ENCODE measurements at regions of chr1 and their contacts with region 1.

Region 1: DNA sequence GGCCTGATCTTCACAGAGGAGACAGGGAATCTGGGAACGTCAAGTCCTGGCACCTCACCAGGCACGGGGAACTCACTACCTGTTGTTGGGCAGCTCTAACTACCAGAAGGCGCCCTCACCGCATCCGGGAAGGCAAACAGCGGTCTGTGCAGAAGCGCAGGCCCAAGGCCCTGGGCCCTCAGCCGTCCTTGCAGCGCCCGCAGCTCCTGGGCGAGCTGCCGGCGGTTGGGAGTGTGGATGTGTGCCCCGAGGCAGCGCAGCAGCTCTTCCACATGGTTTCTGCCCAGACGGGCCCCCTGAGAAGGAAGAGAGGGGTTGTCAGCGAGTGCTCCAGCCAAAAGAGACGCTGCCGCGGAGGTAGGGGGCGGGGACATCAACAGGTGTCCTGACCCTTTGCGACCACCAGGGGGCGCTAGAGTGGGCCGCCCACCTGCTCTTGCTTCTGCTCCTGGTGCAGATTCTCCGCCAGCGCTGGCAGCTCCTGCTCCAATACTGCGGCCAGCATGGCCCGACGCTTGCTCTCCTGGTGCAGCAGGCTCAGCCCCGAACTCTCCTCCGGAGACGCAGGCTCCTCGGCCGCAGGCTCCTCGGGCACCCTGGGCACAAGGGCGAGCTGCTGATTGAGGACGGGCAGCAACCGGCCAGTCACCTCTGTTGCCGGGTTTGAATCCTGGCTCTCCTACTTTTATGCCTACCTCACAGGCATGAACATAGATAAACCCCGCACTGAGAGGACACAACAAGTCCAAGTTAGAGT is 9.3 kb downstream of the MAP3K6 start:
- DNase-seq: peak; percentile 72 to 88 (median 82)
- H3K4me3 ChIP-seq: peak overlapping the region; percentile 91
- H3K4me3 Mint-ChIP-seq: peak overlapping the region; percentile 70 to 89 (median 81)
- H3K27ac ChIP-seq: peak overlapping the region; percentile 47
- H3K27ac Mint-ChIP-seq: peak overlapping the region; percentile 59 to 94 (median 80)
- H3K4me1 ChIP-seq: peaks cover 46% of the 10 kb centered on the region
- H3K4me1 Mint-ChIP-seq: peaks cover 44 to 57% (median 53%) of the 10 kb centered on the region in 3 donors
- H3K27me3 ChIP-seq: no peaks in the 10 kb centered on the region
- H3K27me3 Mint-ChIP-seq: peaks cover 0 to 3% of the 10 kb centered on the region in 2 donors

Region 2: DNA sequence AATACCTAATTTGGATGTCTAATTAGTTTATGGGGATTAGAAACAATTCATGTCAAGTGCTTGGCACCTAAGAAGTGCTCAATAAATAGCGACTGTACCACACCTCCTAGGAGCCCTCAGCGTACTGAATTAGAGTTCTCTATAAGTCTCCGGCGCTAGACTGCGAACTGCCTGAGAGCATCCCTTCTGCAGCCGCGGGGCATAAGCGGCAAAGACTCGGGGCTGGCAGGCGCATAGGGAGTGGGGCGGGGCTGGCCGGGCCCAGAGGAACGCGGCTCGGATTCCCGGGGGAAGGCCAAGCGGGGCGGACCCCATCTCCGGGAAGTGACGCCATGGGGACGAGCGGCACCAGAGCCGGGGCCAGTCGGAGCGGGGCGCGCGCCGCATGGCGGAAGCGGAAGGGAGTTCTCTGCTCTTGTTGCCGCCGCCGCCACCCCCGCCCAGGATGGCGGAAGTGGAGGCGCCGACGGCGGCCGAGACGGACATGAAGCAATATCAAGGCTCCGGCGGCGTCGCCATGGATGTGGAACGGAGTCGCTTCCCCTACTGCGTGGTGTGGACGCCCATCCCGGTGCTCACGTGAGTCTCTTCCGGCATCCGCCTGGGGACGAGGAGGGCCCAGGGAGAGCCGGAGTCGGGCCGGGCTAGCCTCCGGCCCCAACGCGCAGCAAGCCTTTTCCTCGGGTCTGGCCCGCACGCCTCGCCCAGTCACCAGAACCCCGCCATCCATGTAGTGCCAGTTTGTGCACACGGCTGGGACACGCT is 35.5 kb before region 1 on chr1 and contains the start of gene TMEM222:
- CTCF ChIA-PET with region 1: interaction called, 25 read pairs
- POLR2A ChIA-PET with region 1: interaction called, 3 read pairs
- DNase-seq: peak; percentile 95 to 97 (median 97)
- H3K4me3 ChIP-seq: peak within 1 kb of the TSS; percentile 93
- H3K4me3 Mint-ChIP-seq: peak within 1 kb of the TSS; percentile 95 to 99 (median 97)
- H3K27ac ChIP-seq: peak within 1 kb of the TSS; percentile 95
- H3K27ac Mint-ChIP-seq: peak within 1 kb of the TSS; percentile 82 to 97 (median 96)
- H3K4me1 ChIP-seq: peaks cover 36% of the 10 kb centered on the region
- H3K4me1 Mint-ChIP-seq: peaks cover 40 to 58% (median 50%) of the 10 kb centered on the region in 3 donors
- H3K27me3 ChIP-seq: peaks cover 9% of the 10 kb centered on the region
- H3K27me3 Mint-ChIP-seq: peaks cover 4% of the 10 kb centered on the region in 2 donors
- total RNA-seq, gene TMEM222: 52.0 to 54.9 TPM

Region 3: DNA sequence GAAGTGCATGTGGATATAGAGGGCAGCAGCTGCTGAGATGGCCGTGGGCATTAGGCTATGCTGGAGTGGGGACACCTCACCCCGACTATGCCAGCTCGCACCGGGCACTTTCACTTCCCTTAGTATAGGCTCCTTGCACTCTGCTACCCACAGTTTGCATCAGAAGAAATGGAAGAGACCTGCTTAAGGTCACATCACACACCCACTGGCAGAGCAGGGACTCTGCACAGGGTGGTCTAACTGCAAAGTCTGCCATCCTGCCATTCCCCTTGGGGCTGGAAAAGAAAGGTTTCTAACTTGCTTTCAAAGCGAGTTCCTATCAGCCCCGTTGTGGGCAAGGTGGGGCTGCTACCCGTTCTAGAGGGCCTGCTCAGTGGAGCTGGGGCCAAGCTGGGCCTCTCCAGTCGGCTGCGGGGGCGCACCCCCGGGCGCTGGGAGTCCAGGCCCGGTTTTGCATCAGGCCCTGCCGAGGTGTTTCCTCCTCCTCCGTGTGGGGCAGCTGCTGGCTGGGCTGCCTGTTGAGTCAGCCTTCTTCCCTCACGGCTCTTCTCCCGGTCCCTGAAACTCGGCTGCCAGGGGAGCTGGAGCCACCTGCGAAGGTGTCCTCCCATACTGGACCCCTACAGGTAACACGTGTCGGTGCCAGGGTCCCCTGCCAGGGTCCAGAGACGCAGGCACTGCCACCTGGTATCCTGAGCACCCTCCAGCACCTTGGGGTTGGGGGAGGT is 15.8 kb before region 1 on chr1 and contains the start of gene SYTL1:
- CTCF ChIA-PET with region 1: interaction called, 115 read pairs
- POLR2A ChIA-PET with region 1: interaction called, 25 read pairs
- DNase-seq: peak; percentile 55 to 80 (median 68)
- H3K4me3 ChIP-seq: peak within 1 kb of the TSS; percentile 100
- H3K4me3 Mint-ChIP-seq: peak within 1 kb of the TSS; percentile 92 to 100 (median 96)
- H3K27ac ChIP-seq: peak within 1 kb of the TSS; percentile 85
- H3K27ac Mint-ChIP-seq: peak within 1 kb of the TSS; percentile 90 to 99 (median 96)
- H3K4me1 ChIP-seq: peaks cover 35% of the 10 kb centered on the region
- H3K4me1 Mint-ChIP-seq: peaks cover 39 to 70% (median 54%) of the 10 kb centered on the region in 3 donors
- H3K27me3 ChIP-seq: no peaks in the 10 kb centered on the region
- H3K27me3 Mint-ChIP-seq: no peaks in the 10 kb centered on the region
- total RNA-seq, gene SYTL1: 21.9 to 24.2 TPM

Region 4: GRCh38 chr1:27383039-27383605 is 25.7 kb after region 1 on chr1 and contains the start of gene CD164L2:
- CTCF ChIA-PET with region 1: interaction called, 50 read pairs
- POLR2A ChIA-PET with region 1: no interaction called
- DNase-seq: peak in 3 of 5 donors; percentile 27 to 60 (median 36)
- H3K4me3 ChIP-seq: no peak within 1 kb of the TSS
- H3K4me3 Mint-ChIP-seq: no peak within 1 kb of the TSS
- H3K27ac ChIP-seq: no peak within 1 kb of the TSS
- H3K27ac Mint-ChIP-seq: no peak within 1 kb of the TSS
- H3K4me1 ChIP-seq: no peaks in the 10 kb centered on the region
- H3K4me1 Mint-ChIP-seq: no peaks in the 10 kb centered on the region
- H3K27me3 ChIP-seq: no peaks in the 10 kb centered on the region
- H3K27me3 Mint-ChIP-seq: peaks cover 2 to 8% of the 10 kb centered on the region in 2 donors
- total RNA-seq, gene CD164L2: not detected

Region 5: DNA sequence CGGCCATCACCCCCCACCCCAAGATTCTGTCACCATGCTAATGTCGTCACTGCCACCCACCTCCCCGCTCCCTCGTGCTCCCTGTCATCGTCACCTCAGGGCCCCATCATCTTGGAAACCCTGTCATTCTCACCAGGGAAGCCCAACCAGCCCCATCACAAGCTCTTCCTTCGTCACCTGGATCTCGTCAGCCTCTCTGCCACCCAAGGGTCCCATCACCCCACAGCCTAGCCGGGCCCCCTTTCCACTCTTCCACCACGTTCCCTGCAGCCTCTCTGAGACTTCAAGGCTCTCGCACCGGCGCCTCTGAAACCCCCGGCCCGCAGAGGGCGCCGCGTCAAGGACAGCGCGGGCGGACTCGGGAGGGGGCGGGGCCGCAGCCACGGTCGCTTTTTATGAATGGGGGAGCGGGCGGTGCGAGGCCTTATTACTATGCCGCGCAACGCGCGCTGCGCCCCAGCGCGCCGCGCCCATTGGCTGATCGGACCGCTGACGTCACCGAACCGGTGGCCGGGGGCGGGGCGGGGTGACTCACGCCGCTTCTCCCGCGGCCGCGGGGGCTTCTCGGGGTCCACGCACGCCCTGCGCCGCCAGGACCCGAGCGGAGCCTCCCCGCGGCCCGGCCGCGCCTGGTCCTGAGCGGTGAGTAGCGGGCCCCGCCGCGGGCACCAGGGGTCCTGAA is 34.8 kb after region 1 on chr1 and contains the start of gene GPR3:
- CTCF ChIA-PET with region 1: interaction called, 50 read pairs
- POLR2A ChIA-PET with region 1: no interaction called
- DNase-seq: peak; percentile 87 to 94 (median 92)
- H3K4me3 ChIP-seq: peak within 1 kb of the TSS; percentile 69
- H3K4me3 Mint-ChIP-seq: peak within 1 kb of the TSS; percentile 30 to 88 (median 86)
- H3K27ac ChIP-seq: peak within 1 kb of the TSS; percentile 43
- H3K27ac Mint-ChIP-seq: peak within 1 kb of the TSS in 7 of 8 donors; percentile 0 to 95 (median 93)
- H3K4me1 ChIP-seq: peaks cover 17% of the 10 kb centered on the region
- H3K4me1 Mint-ChIP-seq: peaks cover 15 to 22% (median 21%) of the 10 kb centered on the region in 3 donors
- H3K27me3 ChIP-seq: no peaks in the 10 kb centered on the region
- H3K27me3 Mint-ChIP-seq: peaks cover 1 to 12% of the 10 kb centered on the region in 2 donors
- total RNA-seq, gene GPR3: 3.3 to 3.9 TPM